ENCODE measurements at regions of chr18 and their contacts with region 1.

Region 1: DNA sequence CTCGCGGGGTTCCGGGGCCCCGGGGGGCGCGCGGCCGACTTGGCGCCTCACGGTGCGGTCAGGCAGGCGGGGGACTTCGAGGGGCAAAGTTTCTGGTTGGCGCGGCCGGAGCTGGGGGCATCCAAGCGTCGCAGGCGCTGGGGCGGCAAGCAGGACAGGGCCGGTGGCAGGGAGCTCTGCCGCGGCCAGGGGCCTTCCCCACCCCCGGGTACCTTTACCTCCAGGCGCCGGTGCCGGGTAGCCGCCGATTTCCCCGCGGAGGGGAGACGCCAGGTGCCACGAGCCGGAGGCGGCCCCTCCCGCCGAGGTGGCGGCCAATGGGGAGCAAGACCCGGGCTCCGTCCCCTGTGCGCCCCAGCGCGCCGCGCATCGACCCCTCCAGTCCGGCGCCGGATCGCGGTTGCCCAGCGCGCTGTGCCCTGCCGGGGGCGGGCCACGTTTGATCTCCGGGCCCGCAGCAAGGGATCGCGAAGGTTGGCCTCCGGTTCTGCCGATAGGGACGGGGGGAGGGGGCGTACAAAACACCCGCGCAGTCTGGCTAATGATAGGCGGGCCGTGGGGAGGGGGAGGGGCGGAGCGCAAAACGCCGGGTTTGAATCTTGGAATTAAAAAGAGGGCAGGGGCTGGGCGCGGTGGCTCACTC is at the start of gene ST8SIA5:
- DNase-seq: peak; percentile 38 to 66
- ATAC-seq: peak; percentile 64 to 72 (median 66)
- H3K4me3 ChIP-seq: peak within 1 kb of the TSS; percentile 72
- H3K27ac ChIP-seq: peak within 1 kb of the TSS; percentile 88
- H3K4me1 ChIP-seq: peaks cover 27% of the 10 kb centered on the region
- H3K27me3 ChIP-seq: peaks cover 0 to 4% (median 0%) of the 10 kb centered on the region in 3 donors
- CTCF ChIP-seq: no peak
- total RNA-seq, gene ST8SIA5: 1.8 to 9.9 (median 7.2) TPM

Region 2: GRCh38 chr18:46660955-46661749 is 95.5 kb before region 1 on chr18:
- intact Hi-C with region 1: no loop called
- DNase-seq: no peak
- ATAC-seq: peak; percentile 59 to 84 (median 80)
- H3K4me3 ChIP-seq: no peak overlapping the region
- H3K27ac ChIP-seq: no peak overlapping the region
- H3K4me1 ChIP-seq: no peaks in the 10 kb centered on the region
- H3K27me3 ChIP-seq: no peaks in the 10 kb centered on the region
- CTCF ChIP-seq: no peak

Region 3: DNA sequence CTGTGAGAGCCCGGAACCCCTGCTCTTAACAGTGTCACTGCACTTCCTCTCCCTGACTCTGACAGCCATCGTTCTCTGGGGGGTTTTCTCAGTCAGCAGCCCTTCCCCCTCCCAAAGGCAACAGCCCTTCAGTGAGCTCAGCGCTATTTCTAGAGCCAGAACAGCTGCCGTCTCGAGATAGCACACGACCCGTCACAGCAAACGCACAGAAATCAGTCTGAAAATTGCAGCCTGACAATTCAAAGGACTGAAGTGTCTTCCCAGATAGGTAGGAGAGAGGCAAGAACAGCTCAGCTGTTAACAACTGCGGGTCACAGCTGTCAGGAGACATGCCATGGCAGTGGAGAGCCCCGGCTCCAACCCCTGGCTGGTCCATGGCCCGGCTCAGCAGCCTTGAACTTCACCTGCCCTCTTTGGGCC is 45.2 kb before region 1 on chr18:
- intact Hi-C with region 1: loop called (anchors 2 to 5 kb)
- DNase-seq: peak; percentile 38 to 75
- ATAC-seq: peak; percentile 82 to 91 (median 86)
- H3K4me3 ChIP-seq: peak overlapping the region; percentile 27
- H3K27ac ChIP-seq: peak overlapping the region; percentile 91
- H3K4me1 ChIP-seq: peaks cover 43% of the 10 kb centered on the region
- H3K27me3 ChIP-seq: no peaks in the 10 kb centered on the region
- CTCF ChIP-seq: no peak

Measured in psoas muscle (tissue), 8 donors.